BJ (cell line): ENCODE measurements at regions of chr4 and their contacts with region 1.

Region 1: GRCh38 chr4:184745831-184746795 is 12.2 kb upstream of the CENPU start:
- DNase-seq: peak; percentile 66
- H3K4me3 ChIP-seq: no peak overlapping the region
- H3K27me3 ChIP-seq: no peaks in the 10 kb centered on the region
- CTCF ChIP-seq: peak; percentile 86

Region 2: GRCh38 chr4:184983672-184984356 is 237.7 kb after region 1 on chr4:
- CTCF ChIA-PET with region 1: interaction called, 18 read pairs
- POLR2A ChIA-PET with region 1: no interaction called
- DNase-seq: no peak
- H3K4me3 ChIP-seq: no peak overlapping the region
- H3K27me3 ChIP-seq: no peaks in the 10 kb centered on the region
- CTCF ChIP-seq: peak; percentile 45